Activated CD8-positive, alpha-beta T cell treated with anti-CD3 and anti-CD28 coated beads for 36 hours (primary cell): ENCODE measurements at regions of chr5 and their contacts with region 1.

Region 1: GRCh38 chr5:68287976-68288706 is 72.6 kb downstream of the PIK3R1 start:
- DNase-seq: peak; percentile 70
- ATAC-seq: peak; percentile 81
- H3K4me3 Mint-ChIP-seq: peak overlapping the region; percentile 83
- H3K27ac Mint-ChIP-seq: peak overlapping the region; percentile 92
- H3K4me1 Mint-ChIP-seq: peaks cover 84% of the 10 kb centered on the region
- H3K27me3 Mint-ChIP-seq: no peaks in the 10 kb centered on the region
- CTCF ChIP-seq: no peak

Region 2: DNA sequence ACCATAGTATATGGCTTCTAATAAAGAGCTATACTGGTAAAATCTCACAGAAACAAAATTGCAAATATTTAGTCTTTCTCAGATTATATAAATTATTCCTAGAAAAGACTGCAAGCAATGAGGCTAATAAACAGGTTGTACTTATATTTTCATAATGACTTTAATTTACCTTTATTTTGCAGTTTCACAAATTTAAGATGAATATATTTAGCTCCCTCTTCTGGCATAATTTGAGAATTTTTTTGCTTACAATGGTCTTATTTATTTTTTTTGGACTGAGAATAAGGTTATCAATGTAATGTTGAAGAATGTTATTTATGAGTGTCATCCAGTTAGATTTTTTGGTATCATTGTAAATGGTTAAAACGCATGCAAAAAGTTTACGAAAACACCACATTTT is 15.9 kb before region 1 on chr5:
- CTCF ChIA-PET with region 1: interaction called, 34 read pairs
- POLR2A ChIA-PET with region 1: interaction called, 3 read pairs
- intact Hi-C with region 1: no loop called
- DNase-seq: no peak
- ATAC-seq: no peak
- H3K4me3 Mint-ChIP-seq: no peak overlapping the region
- H3K27ac Mint-ChIP-seq: no peak overlapping the region
- H3K4me1 Mint-ChIP-seq: peaks cover 85% of the 10 kb centered on the region
- H3K27me3 Mint-ChIP-seq: no peaks in the 10 kb centered on the region
- CTCF ChIP-seq: peak; percentile 67

Region 3: DNA sequence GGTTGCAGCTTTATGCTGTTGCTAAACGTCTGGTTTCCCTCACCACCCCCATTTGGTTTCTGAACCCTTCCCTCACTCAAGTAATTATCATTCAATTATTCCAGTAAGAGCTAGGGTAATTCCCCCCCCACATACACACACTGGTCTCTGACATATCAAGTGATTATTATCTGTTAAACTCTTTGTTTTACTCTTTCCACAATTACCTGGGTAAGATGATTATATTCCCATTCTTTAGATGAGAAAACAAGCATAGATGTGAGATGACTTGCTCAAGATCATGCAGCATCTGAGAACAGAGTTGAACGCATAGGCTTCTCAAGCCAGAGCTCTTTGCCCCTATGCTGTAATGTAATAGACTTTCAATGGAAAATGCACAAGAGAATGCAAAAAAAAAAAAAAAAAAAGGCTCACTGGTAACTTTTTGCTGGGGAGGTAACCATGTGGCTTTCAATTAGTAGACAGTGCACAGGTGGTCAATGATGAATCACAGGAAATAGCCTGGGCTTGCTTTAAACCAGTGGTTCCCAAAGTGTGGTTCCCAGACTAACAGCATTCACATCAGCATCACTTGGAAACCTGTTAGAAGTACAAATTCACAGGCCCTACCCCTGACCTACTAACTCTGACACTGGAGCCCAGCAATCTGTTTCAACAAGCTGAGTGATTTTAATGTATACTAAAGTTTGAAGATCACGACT is 15.0 kb after region 1 on chr5:
- CTCF ChIA-PET with region 1: interaction called, 24 read pairs
- POLR2A ChIA-PET with region 1: interaction called, 5 read pairs
- intact Hi-C with region 1: no loop called
- DNase-seq: no peak
- ATAC-seq: peak; percentile 57
- H3K4me3 Mint-ChIP-seq: no peak overlapping the region
- H3K27ac Mint-ChIP-seq: peak overlapping the region; percentile 77
- H3K4me1 Mint-ChIP-seq: peaks cover 36% of the 10 kb centered on the region
- H3K27me3 Mint-ChIP-seq: no peaks in the 10 kb centered on the region
- CTCF ChIP-seq: no peak

Region 4: GRCh38 chr5:68433923-68434879 is 146.1 kb after region 1 on chr5:
- CTCF ChIA-PET with region 1: interaction called, 20 read pairs
- POLR2A ChIA-PET with region 1: interaction called, 4 read pairs
- intact Hi-C with region 1: no loop called
- DNase-seq: peak; percentile 98
- ATAC-seq: peak; percentile 95
- H3K4me3 Mint-ChIP-seq: peak overlapping the region; percentile 33
- H3K27ac Mint-ChIP-seq: peak overlapping the region; percentile 78
- H3K4me1 Mint-ChIP-seq: peaks cover 57% of the 10 kb centered on the region
- H3K27me3 Mint-ChIP-seq: peaks cover 4% of the 10 kb centered on the region
- CTCF ChIP-seq: no peak

Region 5: DNA sequence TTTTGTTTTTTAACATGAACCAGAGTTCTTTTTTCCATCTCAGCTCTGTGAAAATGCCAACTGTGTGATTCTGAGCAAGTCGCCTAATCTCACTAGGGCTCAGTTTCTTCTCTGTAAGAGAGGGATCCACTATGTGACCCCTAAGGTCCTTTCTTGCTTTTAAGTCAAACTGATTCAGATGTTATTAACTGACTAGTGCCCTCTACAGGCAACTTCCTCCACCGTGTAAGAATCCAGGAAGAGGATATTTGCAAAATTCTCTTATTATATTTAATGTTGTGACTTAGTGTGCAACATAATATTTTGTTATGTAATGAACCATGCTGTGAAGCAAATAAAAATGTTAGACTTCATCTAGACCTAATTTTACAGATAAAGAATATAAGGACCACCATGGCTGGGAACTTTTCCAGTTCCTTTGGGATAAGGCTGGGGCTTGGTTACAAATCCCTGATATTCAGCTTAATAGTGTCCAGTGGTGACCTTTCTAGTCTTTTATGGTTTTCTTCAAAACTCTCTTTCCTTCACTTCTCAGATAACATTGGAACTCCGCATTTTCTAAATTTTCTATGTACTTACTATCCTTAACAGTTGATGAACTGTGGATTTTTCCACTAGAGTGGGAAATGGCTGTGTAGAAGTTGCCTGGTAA is 172.1 kb after region 1 on chr5:
- CTCF ChIA-PET with region 1: interaction called, 81 read pairs
- POLR2A ChIA-PET with region 1: interaction called, 3 read pairs
- intact Hi-C with region 1: loop called (anchors 1 kb)
- DNase-seq: peak; percentile 70
- ATAC-seq: no peak
- H3K4me3 Mint-ChIP-seq: no peak overlapping the region
- H3K27ac Mint-ChIP-seq: no peak overlapping the region
- H3K4me1 Mint-ChIP-seq: peaks cover 14% of the 10 kb centered on the region
- H3K27me3 Mint-ChIP-seq: no peaks in the 10 kb centered on the region
- CTCF ChIP-seq: peak; percentile 86

Region 6: DNA sequence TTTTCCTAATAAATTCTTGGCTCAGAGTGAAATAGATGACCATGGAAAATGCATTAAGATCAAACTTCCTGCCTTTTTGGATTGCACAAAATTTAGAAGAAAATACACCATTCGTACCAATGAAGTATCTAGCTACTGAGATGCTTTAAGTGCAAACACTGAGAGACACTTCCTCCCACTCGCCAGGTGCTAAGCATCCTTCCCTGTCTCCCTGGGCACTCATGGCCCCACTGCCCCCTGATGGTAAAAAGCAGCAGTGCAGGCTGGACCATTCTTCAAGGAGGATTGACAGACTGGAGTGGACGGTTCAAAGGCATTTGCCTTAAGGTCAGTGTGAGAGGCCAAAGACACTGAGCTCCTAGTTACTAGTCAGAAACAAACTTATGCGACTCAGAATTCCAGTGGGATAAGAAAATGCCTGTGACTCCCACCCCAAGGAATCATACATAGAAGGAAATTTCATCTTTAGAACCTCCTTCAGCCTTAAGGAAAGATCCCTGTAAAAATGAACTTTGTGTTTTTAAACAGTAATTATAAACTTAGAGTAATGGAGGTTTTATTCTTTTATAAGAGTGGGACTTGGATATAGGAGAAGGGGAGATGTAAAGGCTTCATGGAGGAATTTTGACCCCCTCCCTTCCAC is 719.7 kb after region 1 on chr5:
- CTCF ChIA-PET with region 1: interaction called, 5 read pairs
- POLR2A ChIA-PET with region 1: no interaction called
- intact Hi-C with region 1: loop called (anchors 5 kb)
- DNase-seq: peak; percentile 87
- ATAC-seq: peak; percentile 94
- H3K4me3 Mint-ChIP-seq: no peak overlapping the region
- H3K27ac Mint-ChIP-seq: no peak overlapping the region
- H3K4me1 Mint-ChIP-seq: no peaks in the 10 kb centered on the region
- H3K27me3 Mint-ChIP-seq: peaks cover 15% of the 10 kb centered on the region
- CTCF ChIP-seq: peak; percentile 88